Kidney (tissue), 22 donors: ENCODE measurements at regions of chr12 and their contacts with region 1.

Region 1: GRCh38 chr12:113980537-113981337 is 14.6 kb upstream of the RBM19 start:
- DNase-seq: peak in 4 of 5 donors; percentile 53 to 85 (median 68)
- H3K4me3 ChIP-seq: no peak overlapping the region
- H3K27ac ChIP-seq: no peak overlapping the region
- H3K4me1 ChIP-seq: no peaks in the 10 kb centered on the region
- H3K27me3 ChIP-seq: no peaks in the 10 kb centered on the region
- CTCF ChIP-seq: peak; percentile 97

Region 2: GRCh38 chr12:114186241-114187002 is 205.7 kb after region 1 on chr12:
- intact Hi-C with region 1: no loop called
- DNase-seq: peak in 1 of 5 donors; percentile 31
- H3K4me3 ChIP-seq: no peak overlapping the region
- H3K27ac ChIP-seq: no peak overlapping the region
- H3K4me1 ChIP-seq: no peaks in the 10 kb centered on the region
- H3K27me3 ChIP-seq: no peaks in the 10 kb centered on the region
- CTCF ChIP-seq: no peak

Region 3: DNA sequence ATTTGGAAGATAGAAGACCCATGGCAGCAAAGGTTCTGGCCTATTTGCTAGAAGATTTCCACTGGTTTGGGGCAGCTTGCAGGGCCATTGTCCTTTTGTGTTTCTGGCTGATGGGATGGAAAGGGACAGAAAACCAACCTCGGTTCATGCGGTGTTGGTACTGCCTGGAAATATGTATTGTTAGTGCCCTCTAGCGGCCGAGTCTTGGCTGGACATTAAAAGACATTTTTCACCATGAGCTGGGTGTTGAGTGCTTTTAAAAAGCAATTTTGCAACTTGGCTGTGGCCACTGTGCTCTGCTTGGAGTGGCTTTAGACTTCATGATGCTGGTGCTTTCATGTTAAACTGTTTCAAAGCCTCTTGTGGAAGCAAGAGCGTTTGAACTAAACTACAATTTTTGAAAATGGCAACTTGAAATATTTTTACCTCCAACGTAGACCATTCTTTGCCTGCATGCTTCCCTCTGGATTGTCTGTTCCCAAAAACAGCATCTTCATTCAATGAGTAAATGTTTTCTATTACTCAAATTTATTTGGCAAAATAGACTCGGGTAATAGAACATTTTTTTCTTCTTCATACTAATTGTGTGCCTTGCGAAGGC is 527.9 kb after region 1 on chr12:
- intact Hi-C with region 1: loop called (anchors 5 kb)
- DNase-seq: peak in 4 of 5 donors; percentile 65 to 82 (median 74)
- H3K4me3 ChIP-seq: no peak overlapping the region
- H3K27ac ChIP-seq: no peak overlapping the region
- H3K4me1 ChIP-seq: no peaks in the 10 kb centered on the region
- H3K27me3 ChIP-seq: peaks cover 2% of the 10 kb centered on the region
- CTCF ChIP-seq: peak; percentile 72